ENCODE measurements at regions of chr6 and their contacts with region 1.

Region 1: GRCh38 chr6:25601800-25602673 is 50.0 kb upstream of the SCGN start:
- DNase-seq: peak in 1 of 2 experiments; percentile 18
- H3K4me3 ChIP-seq: no peak overlapping the region
- H3K4me3 Mint-ChIP-seq: no peak overlapping the region
- H3K27ac Mint-ChIP-seq: no peak overlapping the region
- H3K4me1 ChIP-seq: peaks cover 13% of the 10 kb centered on the region
- H3K4me1 Mint-ChIP-seq: peaks cover 15% of the 10 kb centered on the region
- H3K27me3 ChIP-seq: no peaks in the 10 kb centered on the region
- H3K27me3 Mint-ChIP-seq: no peaks in the 10 kb centered on the region
- CTCF ChIP-seq: peak; percentile 39 to 64

Region 2: DNA sequence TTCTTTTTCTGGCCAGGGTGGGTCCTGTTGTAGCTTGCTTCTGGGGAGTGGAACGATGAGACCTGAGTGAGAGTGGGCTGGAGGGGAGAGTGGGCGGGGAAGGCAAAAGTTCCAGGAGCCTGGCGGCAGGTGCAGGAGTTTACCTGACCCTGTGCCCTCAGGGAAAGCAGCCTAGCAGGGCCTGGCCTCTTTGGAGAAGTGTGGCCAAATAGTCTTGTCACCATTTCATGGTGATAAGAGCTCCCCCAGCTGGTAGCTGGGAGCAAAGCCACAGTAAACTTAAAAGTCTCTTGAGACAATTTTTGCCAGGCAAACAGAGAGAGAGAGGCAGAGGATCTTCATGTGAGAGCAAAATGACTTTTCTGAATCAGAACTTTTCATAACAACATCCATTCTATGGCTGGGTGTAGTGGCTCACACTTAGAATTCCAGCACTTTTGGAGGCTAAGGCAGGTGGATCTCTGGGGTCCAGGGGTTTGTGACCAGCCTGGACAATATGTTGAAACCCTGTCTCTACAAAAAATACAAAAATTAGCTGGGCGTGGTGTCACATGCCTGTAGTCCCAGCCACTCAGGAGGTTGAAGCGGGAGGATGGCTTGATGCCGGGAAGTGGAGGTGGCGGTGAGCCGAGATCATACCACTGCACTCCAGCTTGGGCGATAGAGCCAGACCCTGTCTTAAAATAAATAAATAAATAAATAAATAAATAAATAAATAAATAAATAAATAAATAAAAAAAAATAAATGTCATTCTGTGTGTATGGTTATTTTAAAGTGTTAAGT is 111.8 kb before region 1 on chr6:
- CTCF ChIA-PET with region 1: no interaction called
- POLR2A ChIA-PET with region 1: no interaction called
- intact Hi-C with region 1: loop called (anchors 1 kb)
- DNase-seq: peak; percentile 87 to 90
- H3K4me3 ChIP-seq: no peak overlapping the region
- H3K4me3 Mint-ChIP-seq: no peak overlapping the region
- H3K27ac Mint-ChIP-seq: peak overlapping the region; percentile 63
- H3K4me1 ChIP-seq: peaks cover 11% of the 10 kb centered on the region
- H3K4me1 Mint-ChIP-seq: peaks cover 7% of the 10 kb centered on the region
- H3K27me3 ChIP-seq: no peaks in the 10 kb centered on the region
- H3K27me3 Mint-ChIP-seq: no peaks in the 10 kb centered on the region
- CTCF ChIP-seq: peak; percentile 84 to 86

Region 3: DNA sequence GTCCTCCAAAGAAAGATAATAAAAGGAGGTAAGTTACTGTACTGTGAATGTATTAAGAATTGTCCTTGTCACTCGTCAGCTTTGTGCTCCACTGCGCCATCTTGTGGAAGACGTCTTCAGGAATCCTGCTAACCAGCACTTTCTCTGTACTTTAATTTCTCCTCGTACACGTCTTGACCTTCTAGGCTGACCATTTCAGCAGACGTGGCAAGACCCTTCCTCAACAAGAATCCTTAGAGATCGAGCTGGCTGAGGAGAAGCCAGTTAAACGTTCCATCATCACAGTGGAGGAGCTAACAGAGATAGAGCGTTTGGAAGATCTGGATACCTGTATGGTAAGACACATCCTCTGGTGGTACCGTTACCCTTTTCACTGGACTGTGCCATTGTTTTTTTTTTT is 45.5 kb before region 1 on chr6:
- CTCF ChIA-PET with region 1: no interaction called
- POLR2A ChIA-PET with region 1: no interaction called
- intact Hi-C with region 1: loop called (anchors 2 kb)
- DNase-seq: peak; percentile 67 to 79
- H3K4me3 ChIP-seq: no peak overlapping the region
- H3K4me3 Mint-ChIP-seq: no peak overlapping the region
- H3K27ac Mint-ChIP-seq: no peak overlapping the region
- H3K4me1 ChIP-seq: no peaks in the 10 kb centered on the region
- H3K4me1 Mint-ChIP-seq: no peaks in the 10 kb centered on the region
- H3K27me3 ChIP-seq: no peaks in the 10 kb centered on the region
- H3K27me3 Mint-ChIP-seq: no peaks in the 10 kb centered on the region
- CTCF ChIP-seq: peak; percentile 79

Region 4: GRCh38 chr6:25660512-25660911 is 58.5 kb after region 1 on chr6:
- CTCF ChIA-PET with region 1: no interaction called
- POLR2A ChIA-PET with region 1: no interaction called
- intact Hi-C with region 1: no loop called
- DNase-seq: no peak
- H3K4me3 ChIP-seq: no peak overlapping the region
- H3K4me3 Mint-ChIP-seq: no peak overlapping the region
- H3K27ac Mint-ChIP-seq: no peak overlapping the region
- H3K4me1 ChIP-seq: peaks cover 5% of the 10 kb centered on the region; the same call in 1 of the 2 replicates
- H3K4me1 Mint-ChIP-seq: no peaks in the 10 kb centered on the region
- H3K27me3 ChIP-seq: no peaks in the 10 kb centered on the region
- H3K27me3 Mint-ChIP-seq: no peaks in the 10 kb centered on the region
- CTCF ChIP-seq: no peak

Region 5: DNA sequence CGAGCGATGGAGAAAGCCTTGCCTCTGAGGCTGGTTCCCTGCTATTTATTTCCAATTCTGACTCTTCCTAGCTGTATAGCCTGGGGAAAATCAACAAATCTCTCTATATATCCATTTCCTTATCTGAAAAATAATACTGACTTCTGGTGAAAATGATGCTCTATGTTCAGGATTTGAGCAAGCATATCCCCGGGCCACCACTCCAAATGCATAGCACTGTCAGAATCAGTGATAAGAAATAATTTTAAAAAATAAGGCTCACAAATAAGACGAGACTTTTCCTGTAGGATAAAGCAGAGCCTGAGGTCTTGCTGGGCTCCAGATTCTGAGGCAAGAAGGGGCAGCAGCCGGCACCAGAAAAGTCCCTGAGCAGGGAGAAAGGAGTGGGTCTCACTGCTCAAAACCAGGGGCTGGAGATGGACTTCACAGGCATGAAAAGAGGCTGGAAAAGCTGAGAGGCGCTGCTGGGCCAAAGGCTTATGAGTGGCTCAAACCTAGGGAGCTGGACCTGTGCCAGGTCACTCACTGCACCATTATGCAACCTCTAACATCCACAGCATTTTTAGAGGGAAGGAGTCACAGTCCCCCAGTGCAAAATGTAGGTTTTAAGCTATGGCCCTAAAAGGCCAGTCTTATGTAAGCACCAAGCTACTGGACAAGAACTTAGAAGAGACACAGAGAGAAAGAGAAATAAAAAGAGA is 104.4 kb after region 1 on chr6:
- CTCF ChIA-PET with region 1: no interaction called
- POLR2A ChIA-PET with region 1: no interaction called
- intact Hi-C with region 1: no loop called
- DNase-seq: no peak
- H3K4me3 ChIP-seq: no peak overlapping the region
- H3K4me3 Mint-ChIP-seq: no peak overlapping the region
- H3K27ac Mint-ChIP-seq: no peak overlapping the region
- H3K4me1 ChIP-seq: no peaks in the 10 kb centered on the region
- H3K4me1 Mint-ChIP-seq: no peaks in the 10 kb centered on the region
- H3K27me3 ChIP-seq: no peaks in the 10 kb centered on the region
- H3K27me3 Mint-ChIP-seq: no peaks in the 10 kb centered on the region
- CTCF ChIP-seq: no peak

Measured in Caco-2 (cell line).